ENCODE measurements at regions of chr6 and their contacts with region 1.

Region 1: GRCh38 chr6:57316581-57317059 is 810 bp upstream of the PRIM2 start:
- DNase-seq: peak; percentile 60
- H3K4me3 ChIP-seq: peak overlapping the region; percentile 76
- H3K27me3 ChIP-seq: no peaks in the 10 kb centered on the region
- CTCF ChIP-seq: peak; percentile 73

Region 2: DNA sequence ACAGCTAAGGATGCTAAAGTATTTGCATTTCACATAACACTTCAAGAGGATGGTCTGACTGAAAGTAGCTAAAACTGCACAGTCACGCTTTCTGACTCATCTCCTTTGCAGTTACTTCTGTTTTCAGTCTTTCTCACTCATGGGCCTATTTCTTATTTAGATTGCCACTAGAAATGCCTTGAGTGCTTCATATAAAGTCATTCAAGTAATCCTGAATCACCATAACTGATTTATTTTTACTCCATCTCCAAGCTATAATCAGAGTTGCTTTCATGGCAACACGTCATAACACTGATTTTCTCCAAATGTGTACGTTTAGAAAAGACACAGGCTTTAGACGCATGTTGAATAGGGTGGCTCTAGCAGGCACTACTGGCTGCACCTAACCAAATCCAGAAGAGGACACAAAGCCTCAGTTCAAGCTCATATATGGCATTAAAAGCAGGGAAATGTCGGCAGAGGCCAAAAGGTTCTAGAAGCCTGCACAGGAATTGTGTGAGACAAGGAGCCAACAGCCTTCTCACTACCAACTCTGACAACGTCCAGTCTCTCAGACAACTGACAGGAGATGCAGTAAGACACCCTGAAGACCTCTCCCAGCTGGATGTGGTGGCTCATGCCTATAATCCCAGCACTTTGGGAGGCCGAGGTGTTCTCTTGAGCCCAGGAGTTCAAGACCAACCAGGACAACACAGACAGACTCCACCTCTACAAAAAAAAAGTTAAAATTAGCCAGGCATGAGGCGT is 425.8 kb before region 1 on chr6:
- CTCF ChIA-PET with region 1: interaction called, 11 read pairs
- POLR2A ChIA-PET with region 1: no interaction called
- DNase-seq: peak; percentile 79
- H3K4me3 ChIP-seq: no peak overlapping the region
- H3K27me3 ChIP-seq: no peaks in the 10 kb centered on the region
- CTCF ChIP-seq: no peak

Region 3: DNA sequence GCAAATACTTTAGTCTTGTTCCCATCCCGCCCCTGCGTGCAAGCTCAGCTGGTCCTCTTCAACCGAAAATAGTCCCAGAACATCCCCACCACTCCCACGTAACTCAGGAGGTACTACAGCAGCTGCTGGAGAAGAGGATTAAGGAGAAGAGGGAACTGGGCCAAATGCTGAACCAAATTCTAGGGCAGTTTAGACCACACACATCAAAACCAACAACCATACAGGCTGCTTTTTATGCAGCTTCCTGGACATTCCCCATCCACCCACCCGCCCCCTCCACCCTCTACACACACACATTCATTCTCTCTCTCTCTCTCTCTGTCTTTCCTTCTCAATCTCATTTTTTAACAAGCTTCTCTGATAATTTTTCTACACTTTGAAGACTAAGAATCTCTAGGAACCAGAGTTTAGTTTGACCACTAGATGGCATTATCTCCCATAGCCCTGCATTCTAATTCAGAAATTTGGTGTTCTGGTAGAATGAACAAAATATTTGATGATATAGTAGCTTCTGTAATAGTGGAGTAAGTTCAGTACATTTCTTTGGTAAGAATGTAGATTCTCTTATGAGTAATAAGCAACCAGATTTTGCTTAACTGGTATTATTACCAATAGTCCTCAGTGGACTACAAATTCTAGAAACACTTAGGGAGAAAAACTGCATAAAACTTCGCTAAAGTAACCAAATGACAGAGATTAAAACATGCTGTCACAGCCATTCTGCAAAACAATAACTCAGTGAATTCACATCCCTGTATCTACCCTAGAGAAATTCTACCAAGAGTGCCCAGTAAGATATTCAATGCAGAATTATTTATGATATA is 413.8 kb before region 1 on chr6:
- CTCF ChIA-PET with region 1: interaction called, 35 read pairs
- POLR2A ChIA-PET with region 1: no interaction called
- DNase-seq: no peak
- H3K4me3 ChIP-seq: no peak overlapping the region
- H3K27me3 ChIP-seq: no peaks in the 10 kb centered on the region
- CTCF ChIP-seq: peak; percentile 69

Region 4: DNA sequence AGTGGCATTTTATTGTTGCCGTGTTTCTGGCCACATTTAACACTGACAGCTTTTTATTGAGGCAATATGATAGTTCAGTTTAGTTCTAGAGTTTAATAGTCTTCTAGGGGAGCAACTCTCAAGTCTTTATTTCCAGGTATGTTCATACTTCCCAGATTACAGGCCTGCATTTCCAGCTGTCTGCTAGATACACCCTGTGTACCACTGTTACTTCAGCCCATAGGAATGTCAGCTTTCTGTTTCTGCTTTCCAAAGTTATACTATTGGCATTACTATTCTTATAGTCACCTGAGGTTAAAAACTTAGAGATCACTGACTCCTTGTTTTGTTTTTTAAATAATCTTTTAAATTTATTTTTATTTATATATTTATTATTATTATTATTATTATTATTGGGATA is 219.0 kb before region 1 on chr6:
- CTCF ChIA-PET with region 1: interaction called, 3 read pairs
- POLR2A ChIA-PET with region 1: interaction called, 13 read pairs
- DNase-seq: no peak
- H3K4me3 ChIP-seq: no peak overlapping the region
- H3K27me3 ChIP-seq: no peaks in the 10 kb centered on the region
- CTCF ChIP-seq: no peak

Region 5: DNA sequence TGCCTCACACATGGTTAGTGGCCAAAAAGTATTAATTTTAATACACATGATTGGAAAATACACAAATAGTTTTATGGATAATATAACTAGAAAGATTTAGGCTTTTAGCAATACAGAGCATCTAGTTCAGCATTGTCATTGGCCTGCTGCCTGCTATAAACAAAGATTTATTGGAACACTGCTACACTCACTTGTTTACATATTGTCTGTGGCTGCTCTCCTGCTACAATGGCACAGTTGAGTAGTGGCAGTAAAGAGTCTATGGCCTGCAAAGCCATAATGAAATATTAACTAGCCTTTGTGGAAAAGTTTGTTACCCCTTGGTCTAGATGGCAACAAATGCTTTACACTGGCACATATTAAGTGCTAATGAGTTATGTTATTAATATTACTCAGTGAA is 188.9 kb before region 1 on chr6:
- CTCF ChIA-PET with region 1: no interaction called
- POLR2A ChIA-PET with region 1: no interaction called
- DNase-seq: no peak
- H3K4me3 ChIP-seq: no peak overlapping the region
- H3K27me3 ChIP-seq: no peaks in the 10 kb centered on the region
- CTCF ChIP-seq: no peak

Region 6: GRCh38 chr6:57190140-57190539 is 126.5 kb before region 1 on chr6:
- CTCF ChIA-PET with region 1: interaction called, 87 read pairs
- POLR2A ChIA-PET with region 1: no interaction called
- DNase-seq: no peak
- H3K4me3 ChIP-seq: no peak overlapping the region
- H3K27me3 ChIP-seq: no peaks in the 10 kb centered on the region
- CTCF ChIP-seq: peak; percentile 54; the same call in 1 of the 2 replicates

Region 7: GRCh38 chr6:57221936-57222742 is 94.5 kb before region 1 on chr6 and contains the start of gene RAB23:
- CTCF ChIA-PET with region 1: interaction called, 14 read pairs
- POLR2A ChIA-PET with region 1: no interaction called
- DNase-seq: peak; percentile 36
- H3K4me3 ChIP-seq: peak within 1 kb of the TSS; percentile 79
- H3K27me3 ChIP-seq: no peaks in the 10 kb centered on the region
- CTCF ChIP-seq: no peak
- polyA plus RNA-seq, gene RAB23: 20.6 and 51.0 TPM in 2 replicates

Region 8: GRCh38 chr6:57267586-57268293 is 48.9 kb before region 1 on chr6:
- CTCF ChIA-PET with region 1: interaction called, 31 read pairs
- POLR2A ChIA-PET with region 1: no interaction called
- DNase-seq: peak; percentile 96
- H3K4me3 ChIP-seq: no peak overlapping the region
- H3K27me3 ChIP-seq: no peaks in the 10 kb centered on the region
- CTCF ChIP-seq: peak; percentile 59

Region 9: DNA sequence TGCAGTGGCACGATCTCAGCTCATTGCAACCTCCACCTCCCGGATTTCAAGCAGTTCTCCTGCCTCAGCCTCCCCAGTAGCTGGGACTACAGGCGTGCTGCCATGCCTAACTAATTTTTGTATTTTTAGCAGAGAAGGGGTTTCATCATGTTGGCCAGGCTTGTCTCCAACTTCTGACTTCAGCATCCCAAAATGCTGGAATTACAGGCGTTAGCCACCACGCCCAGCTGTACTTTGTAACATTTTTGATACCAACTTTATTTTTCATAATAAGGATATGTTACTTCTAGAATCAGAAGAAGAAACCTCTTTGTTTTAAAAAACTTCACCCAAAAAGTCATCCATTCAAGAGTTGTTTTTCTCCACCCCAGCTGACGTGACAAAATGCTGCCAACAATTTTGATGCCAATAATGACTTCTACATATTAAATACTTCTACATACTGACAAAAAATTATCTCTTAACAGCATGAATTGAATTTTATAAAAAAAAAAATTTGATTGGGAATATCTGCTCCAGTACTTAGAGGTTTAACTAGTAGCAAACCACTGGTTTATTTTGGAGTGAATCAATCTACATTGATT is 21.7 kb before region 1 on chr6:
- CTCF ChIA-PET with region 1: no interaction called
- POLR2A ChIA-PET with region 1: no interaction called
- DNase-seq: no peak
- H3K4me3 ChIP-seq: no peak overlapping the region
- H3K27me3 ChIP-seq: no peaks in the 10 kb centered on the region
- CTCF ChIP-seq: no peak

Measured in BJ (cell line).